PC-9 (cell line): ENCODE measurements at regions of chr6 and their contacts with region 1.

Region 1: DNA sequence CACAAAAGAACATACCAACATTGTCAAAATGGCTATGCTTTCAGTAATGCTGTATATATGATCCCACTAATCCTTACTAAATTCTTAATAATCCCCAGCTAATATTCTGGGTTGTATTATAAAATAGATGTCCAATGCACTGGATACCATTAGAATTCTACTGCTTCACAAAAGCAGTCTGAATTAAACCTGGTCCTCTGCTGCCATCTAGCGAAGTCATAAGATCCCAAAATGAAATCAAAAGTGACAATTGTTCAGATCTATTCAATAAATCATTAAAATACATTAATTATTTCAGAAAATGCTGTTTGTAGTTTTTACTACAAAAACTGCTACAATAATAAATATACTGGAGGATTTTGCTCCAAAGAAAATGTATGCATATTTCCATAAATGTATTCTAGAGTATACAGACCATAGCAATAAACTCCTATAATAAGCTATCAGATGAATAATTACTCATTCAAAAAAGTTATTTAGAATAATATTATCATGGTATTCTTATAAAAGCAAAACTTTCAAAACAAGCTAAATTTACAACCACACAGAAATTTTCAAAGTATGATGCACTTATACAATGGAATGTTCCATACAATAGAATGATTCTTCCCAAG is 92.6 kb downstream of the RNGTT start:
- DNase-seq: peak in 1 of 2 experiments; percentile 12
- H3K4me3 ChIP-seq: no peak overlapping the region
- H3K27ac ChIP-seq: no peak overlapping the region
- H3K4me1 ChIP-seq: no peaks in the 10 kb centered on the region
- H3K27me3 ChIP-seq: no peaks in the 10 kb centered on the region
- CTCF ChIP-seq: peak; percentile 76

Region 2: DNA sequence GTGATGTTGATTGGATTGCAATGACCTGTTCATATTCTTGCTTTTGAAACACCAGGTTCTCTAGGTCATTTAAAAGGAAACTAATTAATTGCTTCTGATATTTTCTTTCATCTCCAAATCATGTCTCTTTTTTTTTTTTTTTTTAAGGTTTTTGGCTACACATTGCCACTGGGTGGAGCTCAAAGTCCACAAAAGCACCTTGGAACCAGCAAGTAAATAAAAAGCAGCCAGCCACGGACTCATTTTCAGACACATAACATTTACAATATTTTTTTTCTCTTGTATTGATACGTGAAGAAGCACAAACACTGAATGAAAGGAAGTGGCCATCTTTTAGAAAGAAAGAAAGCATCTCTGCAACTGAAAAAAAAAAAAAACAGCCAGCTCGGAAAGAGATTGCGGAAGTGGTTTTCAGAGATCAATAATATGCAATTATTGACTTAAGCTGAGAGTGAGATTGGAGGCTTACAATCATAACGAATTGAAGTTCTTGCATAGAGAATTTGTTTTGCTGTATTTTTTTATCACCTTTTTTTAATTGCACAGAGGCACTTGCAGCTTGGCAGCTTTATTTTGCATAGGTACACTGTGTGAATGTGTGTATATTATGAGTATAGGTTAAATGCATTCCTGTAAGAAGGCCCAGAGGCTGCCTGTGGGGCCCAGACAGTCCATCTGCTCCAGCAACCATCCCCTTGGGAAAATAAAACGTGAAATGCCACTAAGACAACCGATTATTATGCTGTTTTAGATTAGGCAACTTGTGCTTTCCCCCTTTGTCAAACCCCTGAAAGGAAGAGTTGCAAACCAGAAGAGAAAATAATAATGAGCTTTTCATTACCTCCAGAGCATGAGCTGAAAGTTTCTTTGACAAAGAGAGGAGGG is 1804.1 kb before region 1 on chr6:
- CTCF ChIA-PET with region 1: no interaction called
- POLR2A ChIA-PET with region 1: no interaction called
- intact Hi-C with region 1: loop called (anchors 2 kb)
- DNase-seq: peak in 1 of 2 experiments; percentile 26
- H3K4me3 ChIP-seq: no peak overlapping the region
- H3K27ac ChIP-seq: no peak overlapping the region
- H3K4me1 ChIP-seq: no peaks in the 10 kb centered on the region
- H3K27me3 ChIP-seq: no peaks in the 10 kb centered on the region
- CTCF ChIP-seq: peak; percentile 77

Region 3: GRCh38 chr6:87139236-87139635 is 1731.6 kb before region 1 on chr6:
- CTCF ChIA-PET with region 1: no interaction called
- POLR2A ChIA-PET with region 1: no interaction called
- intact Hi-C with region 1: loop called (anchors 10 kb)
- DNase-seq: peak in 1 of 2 experiments; percentile 23
- H3K4me3 ChIP-seq: no peak overlapping the region
- H3K27ac ChIP-seq: no peak overlapping the region
- H3K4me1 ChIP-seq: no peaks in the 10 kb centered on the region
- H3K27me3 ChIP-seq: no peaks in the 10 kb centered on the region
- CTCF ChIP-seq: peak; percentile 78

Region 4: DNA sequence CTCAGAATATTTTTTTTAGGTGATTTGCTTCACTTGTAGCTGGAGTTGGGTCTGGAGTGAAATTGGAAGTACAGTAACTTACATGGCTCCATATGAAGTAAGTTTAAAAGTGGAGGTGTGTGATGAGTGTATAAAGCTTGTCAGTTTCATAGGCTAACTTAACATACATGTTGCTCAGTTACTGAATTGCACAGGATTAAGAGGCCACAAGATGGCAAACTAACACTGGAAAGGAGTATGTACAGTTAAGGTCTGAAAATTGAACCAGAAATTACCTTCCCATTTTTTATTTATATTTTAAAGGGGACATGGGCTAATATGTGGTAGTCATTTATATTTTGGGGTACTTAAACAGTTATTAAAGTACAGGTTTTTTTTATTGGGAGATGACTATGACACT is 1593.7 kb before region 1 on chr6:
- CTCF ChIA-PET with region 1: no interaction called
- POLR2A ChIA-PET with region 1: no interaction called
- intact Hi-C with region 1: loop called (anchors 5 kb)
- DNase-seq: no peak
- H3K4me3 ChIP-seq: no peak overlapping the region
- H3K27ac ChIP-seq: no peak overlapping the region
- H3K4me1 ChIP-seq: no peaks in the 10 kb centered on the region
- H3K27me3 ChIP-seq: no peaks in the 10 kb centered on the region
- CTCF ChIP-seq: peak; percentile 41

Region 5: DNA sequence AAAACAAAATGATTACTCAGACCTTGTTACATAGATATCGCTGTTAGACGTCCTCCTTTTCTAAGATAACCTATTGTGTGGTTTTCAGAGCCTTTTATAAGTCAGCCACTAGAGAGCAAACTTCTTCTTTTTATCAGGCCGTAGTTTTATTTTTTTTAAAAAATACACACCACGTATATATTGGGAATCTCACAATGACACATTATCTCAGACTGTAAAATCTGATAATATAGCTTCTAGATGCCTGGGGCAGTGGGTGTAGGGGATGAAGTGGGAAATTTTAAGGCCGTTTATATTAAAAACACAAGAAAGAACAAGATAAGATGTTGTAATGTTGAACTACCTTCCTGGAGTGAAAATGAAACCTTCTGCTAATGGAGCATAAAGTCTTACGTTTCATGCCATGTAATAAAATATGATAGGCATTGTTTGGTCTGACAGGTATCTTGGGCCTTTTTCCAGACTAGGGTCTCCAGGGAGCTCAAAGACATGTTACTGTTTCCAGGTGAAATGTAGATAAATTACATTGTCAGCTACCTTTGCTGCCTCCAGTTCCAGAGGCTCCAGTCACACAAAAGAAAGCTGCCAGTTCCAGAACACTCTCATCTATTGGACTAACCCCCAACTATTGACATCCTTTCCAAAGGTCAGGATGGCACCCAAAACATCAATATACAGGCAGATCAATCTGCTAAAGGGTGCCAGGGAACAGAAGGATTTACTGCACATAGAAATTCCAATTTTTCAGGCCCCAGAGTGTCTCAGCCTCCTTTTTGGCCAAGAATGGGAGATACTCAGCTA is 1038.6 kb before region 1 on chr6:
- CTCF ChIA-PET with region 1: no interaction called
- POLR2A ChIA-PET with region 1: no interaction called
- intact Hi-C with region 1: loop called (anchors 5 kb)
- DNase-seq: no peak
- H3K4me3 ChIP-seq: peak overlapping the region; percentile 56
- H3K27ac ChIP-seq: no peak overlapping the region
- H3K4me1 ChIP-seq: no peaks in the 10 kb centered on the region
- H3K27me3 ChIP-seq: no peaks in the 10 kb centered on the region
- CTCF ChIP-seq: peak; percentile 52; the same call in 1 of the 2 replicates

Region 6: DNA sequence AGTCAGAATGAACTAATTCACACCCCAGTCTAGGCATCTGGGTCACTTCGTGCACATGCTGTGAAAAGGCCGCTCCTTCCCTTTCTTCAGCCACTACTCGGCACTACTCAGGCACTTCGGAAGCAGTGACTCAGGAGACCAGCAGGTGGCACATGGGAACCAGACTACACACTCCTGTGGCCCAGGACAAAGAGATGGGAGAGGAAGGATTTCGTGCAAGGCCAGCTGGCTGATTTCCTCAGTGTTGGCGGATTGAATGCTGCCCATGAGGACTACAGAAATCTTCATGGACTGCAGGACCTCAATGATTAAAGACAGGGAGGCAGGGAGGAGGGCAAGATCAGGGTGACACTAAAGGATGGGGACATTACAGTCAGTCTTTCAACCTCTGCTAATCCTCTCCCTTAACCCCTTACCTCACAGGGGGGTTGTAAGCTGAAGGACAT is 941.0 kb before region 1 on chr6:
- CTCF ChIA-PET with region 1: no interaction called
- POLR2A ChIA-PET with region 1: no interaction called
- intact Hi-C with region 1: loop called (anchors 1 kb)
- DNase-seq: peak; percentile 42 to 62
- H3K4me3 ChIP-seq: no peak overlapping the region
- H3K27ac ChIP-seq: no peak overlapping the region
- H3K4me1 ChIP-seq: no peaks in the 10 kb centered on the region
- H3K27me3 ChIP-seq: no peaks in the 10 kb centered on the region
- CTCF ChIP-seq: peak; percentile 78

Region 7: DNA sequence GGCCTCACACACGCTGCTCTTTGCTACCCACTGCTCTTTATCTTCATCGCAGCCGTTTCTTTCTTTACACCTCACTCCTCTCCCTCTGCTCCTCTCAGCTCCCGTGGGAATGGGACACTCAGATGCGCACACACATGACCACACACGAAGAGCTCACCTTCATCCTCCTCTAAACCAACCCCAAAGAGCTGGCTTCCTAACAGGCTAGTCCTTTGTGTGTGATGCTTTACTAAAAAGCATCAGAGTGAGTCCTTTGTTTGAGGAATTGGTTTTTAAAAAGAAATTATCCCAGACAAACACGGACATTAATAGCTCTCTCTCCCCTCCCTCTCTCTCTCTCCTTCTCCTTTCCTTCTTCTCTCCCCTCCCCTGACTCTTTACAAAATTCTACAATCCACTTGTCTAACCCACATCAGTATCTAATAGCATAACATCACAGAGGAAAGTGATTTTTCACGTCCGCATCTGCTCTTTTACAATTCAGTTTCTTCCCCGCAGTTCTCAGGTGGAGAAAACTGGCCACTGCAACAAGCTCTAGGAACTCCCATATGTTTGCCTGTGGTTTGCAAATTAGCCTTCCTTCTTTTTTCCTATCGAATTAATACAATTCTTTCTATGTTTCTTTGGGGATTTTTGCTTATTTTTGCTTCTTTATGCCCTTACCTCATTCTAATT is 397.8 kb before region 1 on chr6:
- CTCF ChIA-PET with region 1: interaction called, 14 read pairs
- POLR2A ChIA-PET with region 1: no interaction called
- intact Hi-C with region 1: no loop called
- DNase-seq: no peak
- H3K4me3 ChIP-seq: no peak overlapping the region
- H3K27ac ChIP-seq: no peak overlapping the region
- H3K4me1 ChIP-seq: no peaks in the 10 kb centered on the region
- H3K27me3 ChIP-seq: no peaks in the 10 kb centered on the region
- CTCF ChIP-seq: no peak